ENCODE measurements at regions of chr20 and their contacts with region 1.

Region 1: DNA sequence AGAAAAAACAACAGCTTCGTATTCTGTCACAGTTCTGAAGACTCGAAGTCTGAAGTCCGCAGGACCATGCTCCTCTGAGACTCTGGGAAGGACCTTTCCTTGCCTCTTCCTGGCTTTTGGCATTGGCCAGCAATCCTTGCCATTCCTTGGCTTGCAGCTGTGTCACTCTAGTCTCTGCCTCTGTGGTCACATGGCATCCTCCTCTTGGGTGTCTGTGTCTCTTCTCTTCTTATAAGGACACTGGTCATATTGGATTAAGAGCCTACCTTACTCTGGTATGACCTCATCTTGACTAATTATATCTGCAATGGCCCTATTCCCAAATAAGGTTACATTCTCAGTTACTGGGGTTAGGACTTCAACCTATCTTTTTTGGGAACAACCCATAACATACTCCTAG is 49.8 kb upstream of the GTSF1L start:
- DNase-seq: no peak
- H3K4me3 Mint-ChIP-seq: no peak overlapping the region
- H3K27ac Mint-ChIP-seq: no peak overlapping the region
- H3K4me1 Mint-ChIP-seq: no peaks in the 10 kb centered on the region
- H3K27me3 Mint-ChIP-seq: peaks cover 4% of the 10 kb centered on the region

Region 2: GRCh38 chr20:43691928-43692524 is 84.6 kb before region 1 on chr20:
- intact Hi-C with region 1: no loop called
- DNase-seq: peak; percentile 88
- H3K4me3 Mint-ChIP-seq: no peak overlapping the region
- H3K27ac Mint-ChIP-seq: no peak overlapping the region
- H3K4me1 Mint-ChIP-seq: peaks cover 11% of the 10 kb centered on the region
- H3K27me3 Mint-ChIP-seq: no peaks in the 10 kb centered on the region

Region 3: DNA sequence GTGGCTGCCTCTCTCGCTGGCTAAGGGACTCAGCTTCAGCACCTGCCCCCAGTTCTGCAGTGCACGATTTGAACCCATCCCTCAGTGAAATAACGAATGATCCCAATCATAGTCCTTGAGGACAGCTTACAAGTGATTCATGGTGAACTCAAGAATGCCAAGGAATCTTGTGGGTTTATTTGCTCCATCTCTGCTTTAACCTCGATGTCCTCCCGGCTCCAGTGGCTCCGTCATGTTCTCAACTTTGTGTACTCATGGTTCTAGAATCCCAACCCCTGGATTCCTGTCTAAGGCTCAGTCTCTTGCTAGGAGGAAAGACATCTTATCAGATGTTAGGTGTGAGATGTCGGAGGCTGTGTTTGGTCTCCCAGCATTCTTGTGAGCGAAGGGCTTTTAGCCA is 20.8 kb before region 1 on chr20:
- intact Hi-C with region 1: loop called (anchors 1 kb)
- DNase-seq: no peak
- H3K4me3 Mint-ChIP-seq: no peak overlapping the region
- H3K27ac Mint-ChIP-seq: no peak overlapping the region
- H3K4me1 Mint-ChIP-seq: peaks cover 35% of the 10 kb centered on the region
- H3K27me3 Mint-ChIP-seq: no peaks in the 10 kb centered on the region

Region 4: DNA sequence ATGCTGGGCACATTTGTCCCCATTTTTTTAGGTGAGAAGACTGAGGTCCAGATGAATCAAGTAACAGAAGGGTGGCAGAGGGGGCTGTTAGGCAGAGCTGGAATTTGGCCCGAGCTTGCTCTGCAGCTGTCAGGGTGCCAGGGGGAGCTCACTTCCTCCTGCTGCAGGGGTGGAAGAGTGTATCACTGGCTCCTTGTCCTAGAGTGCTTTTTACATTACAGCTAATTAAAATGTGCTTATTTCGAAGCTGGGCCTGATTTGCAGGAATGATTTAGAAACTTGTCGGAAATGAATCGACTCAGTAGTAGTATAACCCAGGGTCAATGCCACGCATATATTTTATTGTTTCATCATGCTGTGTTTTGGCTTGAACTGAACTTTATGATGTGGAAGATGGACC is 149.2 kb after region 1 on chr20:
- intact Hi-C with region 1: no loop called
- DNase-seq: no peak
- H3K4me3 Mint-ChIP-seq: peak overlapping the region; percentile 23
- H3K27ac Mint-ChIP-seq: no peak overlapping the region
- H3K4me1 Mint-ChIP-seq: peaks cover 50% of the 10 kb centered on the region
- H3K27me3 Mint-ChIP-seq: peaks cover 35% of the 10 kb centered on the region